ENCODE measurements at regions of chr1 and their contacts with region 1.

Region 1: GRCh38 chr1:88877382-88877825 is 14.0 kb downstream of the GTF2B start:
- DNase-seq: no peak
- H3K4me3 Mint-ChIP-seq: no peak overlapping the region
- H3K27ac Mint-ChIP-seq: no peak overlapping the region
- H3K4me1 Mint-ChIP-seq: peaks cover 15% of the 10 kb centered on the region
- H3K27me3 Mint-ChIP-seq: no peaks in the 10 kb centered on the region
- CTCF ChIP-seq: no peak

Region 2: DNA sequence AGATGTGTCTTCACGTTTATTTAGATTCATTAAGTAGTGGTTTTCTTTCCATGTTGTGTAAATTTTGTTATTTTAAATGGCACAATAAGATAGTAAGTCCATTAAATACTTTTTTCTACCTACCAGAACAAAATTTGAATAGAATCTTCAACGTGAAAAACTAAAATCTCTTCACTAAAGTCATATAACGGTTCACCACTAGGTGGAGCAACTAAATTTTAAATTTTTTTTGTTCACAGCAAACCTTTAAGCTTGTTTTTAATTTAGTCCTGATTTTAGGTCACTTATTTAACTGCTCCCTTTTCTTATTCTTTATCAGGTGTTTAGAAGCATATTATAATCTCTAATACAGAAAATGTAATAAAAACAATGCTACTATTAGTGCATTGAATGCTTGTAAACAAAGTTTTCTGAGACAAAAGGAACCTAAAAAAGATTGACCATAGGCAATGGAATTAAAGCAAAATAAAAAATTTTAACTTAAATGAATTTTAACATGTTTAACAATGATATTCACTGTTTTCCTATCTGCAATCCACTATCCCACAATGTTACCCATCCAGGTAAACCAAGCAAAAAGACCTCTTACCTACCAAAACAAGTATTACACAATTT is 221.6 kb before region 1 on chr1:
- CTCF ChIA-PET with region 1: no interaction called
- intact Hi-C with region 1: loop called (anchors 2 kb)
- DNase-seq: no peak
- H3K4me3 Mint-ChIP-seq: no peak overlapping the region
- H3K27ac Mint-ChIP-seq: no peak overlapping the region
- H3K4me1 Mint-ChIP-seq: peaks cover 8% of the 10 kb centered on the region
- H3K27me3 Mint-ChIP-seq: no peaks in the 10 kb centered on the region
- CTCF ChIP-seq: no peak

Region 3: GRCh38 chr1:88736639-88737248 is 140.7 kb before region 1 on chr1:
- CTCF ChIA-PET with region 1: interaction called, 3 read pairs
- intact Hi-C with region 1: loop called (anchors 1 kb)
- DNase-seq: peak; percentile 66
- H3K4me3 Mint-ChIP-seq: no peak overlapping the region
- H3K27ac Mint-ChIP-seq: peak overlapping the region; percentile 49
- H3K4me1 Mint-ChIP-seq: peaks cover 45% of the 10 kb centered on the region
- H3K27me3 Mint-ChIP-seq: no peaks in the 10 kb centered on the region
- CTCF ChIP-seq: peak; percentile 84

Region 4: GRCh38 chr1:88800382-88801051 is 76.9 kb before region 1 on chr1:
- CTCF ChIA-PET with region 1: interaction called, 4 read pairs
- intact Hi-C with region 1: loop called (anchors 1 kb)
- DNase-seq: peak; percentile 44
- H3K4me3 Mint-ChIP-seq: no peak overlapping the region
- H3K27ac Mint-ChIP-seq: no peak overlapping the region
- H3K4me1 Mint-ChIP-seq: peaks cover 35% of the 10 kb centered on the region
- H3K27me3 Mint-ChIP-seq: no peaks in the 10 kb centered on the region
- CTCF ChIP-seq: peak; percentile 60

Region 5: DNA sequence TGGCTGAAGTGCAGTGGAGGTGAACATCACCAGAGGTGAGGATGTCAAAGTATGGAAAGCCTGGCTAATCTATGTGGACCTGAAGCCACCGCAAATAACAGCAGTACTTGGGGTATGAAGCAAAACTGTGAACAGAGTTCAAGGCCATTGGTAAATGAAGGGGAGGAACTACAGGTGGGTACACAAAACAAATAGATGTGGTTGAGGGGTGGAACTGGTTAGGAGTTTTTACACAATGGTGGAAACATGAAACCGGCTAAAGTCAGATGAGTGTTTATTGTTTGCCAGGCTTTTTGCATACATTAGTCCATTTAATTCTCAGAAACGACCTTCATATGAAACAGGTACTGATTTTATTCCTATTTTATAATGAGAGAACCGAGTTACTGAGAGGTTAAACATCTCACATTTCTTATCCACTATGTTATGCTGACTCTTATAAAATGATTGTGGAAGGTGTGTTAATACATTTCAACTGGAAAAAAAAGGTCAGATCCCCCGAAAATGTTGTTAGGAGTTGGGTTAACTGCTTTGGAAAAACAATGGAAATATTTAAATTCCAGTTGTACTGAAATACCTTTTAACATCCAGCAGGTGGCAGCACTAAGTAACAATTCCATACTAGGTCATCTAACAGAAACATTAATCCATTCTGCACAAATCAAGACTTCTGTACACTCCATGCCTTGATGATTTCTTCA is 58.3 kb after region 1 on chr1:
- CTCF ChIA-PET with region 1: no interaction called
- intact Hi-C with region 1: no loop called
- DNase-seq: peak; percentile 10
- H3K4me3 Mint-ChIP-seq: no peak overlapping the region
- H3K27ac Mint-ChIP-seq: no peak overlapping the region
- H3K4me1 Mint-ChIP-seq: no peaks in the 10 kb centered on the region
- H3K27me3 Mint-ChIP-seq: no peaks in the 10 kb centered on the region
- CTCF ChIP-seq: peak; percentile 29